AG04449 (cell line): ENCODE measurements at regions of chr10 and their contacts with region 1.

Region 1: GRCh38 chr10:101840741-101841453 is 2.7 kb downstream of the KCNIP2 start:
- DNase-seq: no peak
- H3K4me3 ChIP-seq: peak overlapping the region; percentile 45
- CTCF ChIP-seq: peak; percentile 99

Region 2: GRCh38 chr10:101858723-101859500 is 18.0 kb after region 1 on chr10:
- CTCF ChIA-PET with region 1: interaction called, 113 read pairs
- POLR2A ChIA-PET with region 1: no interaction called
- DNase-seq: no peak
- H3K4me3 ChIP-seq: no peak overlapping the region
- CTCF ChIP-seq: no peak

Region 3: DNA sequence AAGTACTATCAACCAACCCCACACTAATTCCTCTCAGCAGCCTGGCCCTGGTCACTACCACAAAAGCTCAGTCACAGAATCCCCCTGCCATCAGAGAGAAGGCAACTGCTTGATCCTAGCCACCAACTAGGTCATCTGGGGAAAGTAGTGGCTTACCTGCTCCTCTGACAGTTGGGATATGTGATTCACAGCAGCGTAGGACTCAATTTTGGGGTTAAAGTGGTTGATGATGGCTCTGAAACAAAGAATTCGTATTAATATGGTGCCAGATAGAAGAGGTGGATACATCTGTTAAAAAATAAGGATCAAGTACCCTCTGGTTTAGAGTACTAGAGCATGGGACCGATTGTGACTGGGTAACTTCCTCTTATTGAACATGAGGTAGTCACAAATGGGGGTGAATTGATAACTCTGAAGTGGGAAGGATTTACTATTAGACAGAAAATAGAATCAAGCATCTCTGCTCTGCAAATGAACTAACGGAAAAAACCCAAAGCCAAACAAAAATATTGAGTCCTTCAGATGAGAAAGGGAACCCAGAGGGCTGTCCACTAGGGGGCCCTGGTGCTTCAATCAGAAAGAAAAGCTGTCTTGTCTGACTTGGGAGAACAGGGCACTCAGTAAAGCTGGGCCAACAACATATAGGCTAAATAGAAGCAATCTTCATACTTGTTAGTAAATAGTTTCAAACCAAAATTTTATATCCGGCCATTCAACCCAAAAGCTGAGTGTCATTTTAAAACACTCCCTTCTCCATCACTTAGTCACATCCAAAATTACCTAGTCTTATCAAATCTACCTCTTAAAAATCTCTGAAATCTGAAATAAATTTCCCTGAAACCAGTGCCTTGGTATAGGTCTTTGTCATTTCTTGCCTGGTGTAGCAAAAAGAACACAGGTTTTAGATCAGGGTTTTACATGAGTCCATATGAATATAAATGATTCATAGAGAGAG is 48.6 kb after region 1 on chr10:
- CTCF ChIA-PET with region 1: interaction called, 27 read pairs
- POLR2A ChIA-PET with region 1: interaction called, 3 read pairs
- DNase-seq: peak; percentile 45
- H3K4me3 ChIP-seq: no peak overlapping the region
- CTCF ChIP-seq: peak; percentile 84

Region 4: DNA sequence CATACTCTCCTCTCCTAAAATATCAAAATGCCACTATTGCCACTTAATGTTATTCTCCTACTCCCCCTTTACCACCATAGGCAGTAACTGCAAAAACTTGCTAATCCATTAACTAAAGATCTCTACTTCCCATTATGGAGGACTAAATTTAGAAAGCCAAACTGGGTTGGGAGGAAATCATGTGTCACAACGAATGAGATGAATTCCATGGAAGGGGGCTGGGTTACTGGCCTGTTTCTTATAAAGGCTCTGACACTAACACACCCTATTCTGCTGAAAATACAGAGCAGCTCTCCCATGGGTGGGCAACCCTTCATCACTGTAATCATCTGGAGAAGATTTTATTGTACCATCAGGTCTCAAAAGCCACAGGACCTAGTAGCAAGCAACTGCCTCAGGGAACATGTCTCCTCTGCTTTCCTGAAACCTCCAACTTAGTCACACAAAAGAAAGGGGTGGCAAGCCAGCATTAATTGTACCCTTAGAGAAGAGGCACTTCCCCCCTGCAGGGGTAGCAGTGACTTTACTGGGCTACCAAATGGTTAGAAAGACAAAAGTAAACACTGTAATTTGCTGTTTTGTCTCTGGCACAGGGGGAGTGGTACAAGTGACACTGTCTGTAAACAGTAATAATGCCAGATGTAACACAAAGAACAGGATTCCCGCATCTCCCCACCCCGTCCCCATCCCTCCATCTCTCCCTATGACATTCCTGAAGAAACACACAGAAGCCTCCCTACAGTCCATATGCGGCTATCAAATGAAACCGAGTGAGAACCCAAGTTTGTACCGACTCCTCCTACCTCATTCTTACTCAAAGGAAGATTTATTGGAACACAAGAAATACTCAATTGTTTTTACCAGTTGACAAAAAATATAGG is 133.4 kb after region 1 on chr10:
- CTCF ChIA-PET with region 1: interaction called, 14 read pairs
- POLR2A ChIA-PET with region 1: no interaction called
- DNase-seq: no peak
- H3K4me3 ChIP-seq: no peak overlapping the region
- CTCF ChIP-seq: no peak

Region 5: GRCh38 chr10:102024799-102025198 is 183.9 kb after region 1 on chr10:
- CTCF ChIA-PET with region 1: interaction called, 18 read pairs
- POLR2A ChIA-PET with region 1: no interaction called
- DNase-seq: no peak
- H3K4me3 ChIP-seq: no peak overlapping the region
- CTCF ChIP-seq: no peak